ENCODE measurements at regions of chr2 and their contacts with region 1.

Region 1: GRCh38 chr2:237572021-237572741 is 5.8 kb downstream of the PRLH start:
- ATAC-seq: peak; percentile 98 to 100 (median 99)
- H3K4me3 ChIP-seq: no peak overlapping the region
- H3K27ac ChIP-seq: no peak overlapping the region
- H3K4me1 ChIP-seq: no peaks in the 10 kb centered on the region

Region 2: DNA sequence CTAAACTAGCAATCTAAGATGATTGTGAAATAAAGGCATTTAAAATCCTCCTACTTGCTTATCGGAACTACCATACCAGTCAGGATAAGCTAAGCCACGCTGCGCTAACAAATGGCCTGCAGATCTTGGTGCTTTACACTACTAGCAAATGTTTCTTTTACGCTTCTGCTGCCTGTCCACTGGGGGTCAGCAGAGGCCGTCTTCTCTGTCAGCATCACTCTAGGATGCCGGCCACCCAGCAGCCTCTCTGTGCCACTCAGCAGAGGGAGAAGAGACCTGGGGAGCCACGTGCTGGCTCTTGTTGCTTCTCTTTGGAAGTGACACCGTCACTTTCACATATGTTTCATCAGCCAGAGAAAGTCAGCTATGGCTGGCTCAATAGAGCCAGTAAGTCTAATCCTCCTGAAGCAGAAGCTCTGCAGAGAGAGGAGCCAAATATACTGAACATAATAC is 449.9 kb before region 1 on chr2:
- in situ Hi-C with region 1: loop called in 1 of 9 experiments (anchors 25 kb)
- ATAC-seq: peak in 6 of 8 experiments; percentile 16 to 96 (median 62)
- H3K4me3 ChIP-seq: no peak overlapping the region
- H3K27ac ChIP-seq: no peak overlapping the region
- H3K4me1 ChIP-seq: no peaks in the 10 kb centered on the region

Region 3: GRCh38 chr2:237500681-237501424 is 71.3 kb before region 1 on chr2:
- in situ Hi-C with region 1: loop called in 1 of 9 experiments (anchors 10 kb)
- ATAC-seq: peak in 2 of 8 experiments; percentile 7 to 32
- H3K4me3 ChIP-seq: no peak overlapping the region
- H3K27ac ChIP-seq: no peak overlapping the region
- H3K4me1 ChIP-seq: no peaks in the 10 kb centered on the region

Region 4: GRCh38 chr2:237512774-237513466 is 59.3 kb before region 1 on chr2:
- in situ Hi-C with region 1: loop called in 2 of 9 experiments (anchors 5 to 10 kb)
- ATAC-seq: peak; percentile 85 to 98 (median 88)
- H3K4me3 ChIP-seq: no peak overlapping the region
- H3K27ac ChIP-seq: no peak overlapping the region
- H3K4me1 ChIP-seq: peaks cover 0 to 15% of the 10 kb centered on the region in 2 donors

Region 5: DNA sequence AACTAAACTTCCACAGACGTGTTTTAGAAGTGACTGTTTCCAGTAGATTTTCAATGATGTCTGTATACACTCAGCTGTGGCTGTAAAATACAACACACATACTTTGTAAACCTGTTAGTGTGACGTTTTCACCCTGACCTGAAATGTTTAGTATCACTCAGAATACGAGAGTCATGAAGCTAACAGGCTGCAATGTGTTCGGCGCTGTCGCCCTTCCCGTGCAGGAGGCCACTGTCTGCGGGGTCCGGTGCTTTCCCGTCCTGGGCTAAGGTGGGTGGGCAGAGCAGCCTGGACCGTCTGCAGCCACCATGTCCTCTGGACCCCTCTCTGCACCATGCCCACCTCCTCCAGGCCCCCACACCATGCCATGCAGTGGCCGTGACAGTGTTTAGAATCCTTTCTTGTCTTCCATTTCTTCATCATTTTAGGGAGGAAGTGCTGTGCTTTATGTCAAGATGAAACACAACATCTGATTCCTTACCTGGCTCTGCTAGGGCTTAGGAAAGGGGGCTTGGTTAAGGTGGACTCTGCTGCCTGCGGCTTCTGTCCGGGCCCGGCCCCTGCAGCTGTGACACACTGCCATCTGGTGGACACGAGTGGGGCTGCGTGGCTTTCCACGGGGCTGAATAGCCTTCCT is 172.6 kb after region 1 on chr2:
- in situ Hi-C with region 1: loop called in 3 of 9 experiments (anchors 10 to 25 kb)
- ATAC-seq: peak; percentile 82 to 98 (median 94)
- H3K4me3 ChIP-seq: no peak overlapping the region
- H3K27ac ChIP-seq: no peak overlapping the region
- H3K4me1 ChIP-seq: no peaks in the 10 kb centered on the region